Testis (tissue), 5 donors: ENCODE measurements at regions of chr14 and their contacts with region 1.

Region 1: DNA sequence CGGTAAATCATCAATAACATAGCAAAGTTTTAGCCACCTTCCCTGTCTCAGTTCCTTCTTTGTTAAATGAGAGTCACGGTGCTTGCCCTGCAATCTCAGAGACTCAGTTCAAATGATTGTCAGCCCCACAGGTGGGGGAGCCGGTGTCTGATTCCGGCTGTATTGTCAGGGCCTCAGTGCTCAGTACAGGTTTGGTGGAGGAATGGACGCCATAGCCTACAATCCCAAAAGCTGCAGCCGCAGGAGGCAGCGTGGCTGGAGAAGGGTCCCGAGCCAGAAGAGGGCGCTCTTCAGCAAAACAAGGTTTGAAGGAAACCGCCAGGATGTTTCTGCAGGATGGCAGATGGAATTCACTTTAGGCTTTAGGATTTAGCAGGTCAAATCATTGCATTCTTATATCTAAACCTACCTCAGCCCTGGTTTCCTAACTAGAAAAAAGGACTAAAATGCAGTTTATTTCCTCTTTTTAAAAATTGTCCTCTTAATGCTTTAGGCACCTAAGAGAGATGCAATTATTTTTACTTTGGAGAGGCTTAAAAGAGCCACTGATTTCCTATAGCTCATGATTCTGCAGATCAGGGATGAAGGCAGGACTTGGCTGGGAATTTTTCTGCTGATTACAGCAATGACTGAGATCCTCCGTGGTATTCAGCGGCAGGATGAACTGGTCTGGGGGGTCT is 29.2 kb downstream of the FOS start:
- DNase-seq: peak; percentile 94
- H3K4me3 ChIP-seq: no peak overlapping the region
- H3K27ac ChIP-seq: no peak overlapping the region
- H3K4me1 ChIP-seq: peaks cover 7% of the 10 kb centered on the region
- H3K27me3 ChIP-seq: no peaks in the 10 kb centered on the region
- CTCF ChIP-seq: peak; percentile 79 to 93 (median 84)
- POLR2A ChIP-seq: no peak

Region 2: DNA sequence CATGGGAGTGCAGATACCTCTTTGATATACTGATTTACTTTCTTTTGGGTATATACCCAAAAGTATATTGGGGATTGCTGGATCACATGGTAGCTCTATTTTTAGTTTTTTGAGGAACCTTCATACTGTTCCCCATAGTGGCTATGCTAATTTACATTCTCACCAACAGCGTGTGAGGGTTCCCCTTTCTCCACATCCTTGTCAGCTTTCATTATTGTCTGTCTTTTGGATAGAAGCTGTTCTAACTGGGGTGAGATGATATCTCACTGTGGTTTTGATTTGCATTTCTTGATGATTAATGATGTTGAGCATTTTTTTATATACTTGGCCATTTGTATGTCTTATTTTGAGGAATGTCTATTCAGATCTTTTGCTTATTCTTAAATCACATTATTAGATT is 75.9 kb after region 1 on chr14:
- intact Hi-C with region 1: no loop called
- DNase-seq: no peak
- H3K4me3 ChIP-seq: no peak overlapping the region
- H3K27ac ChIP-seq: no peak overlapping the region
- H3K4me1 ChIP-seq: peaks cover 22% of the 10 kb centered on the region
- H3K27me3 ChIP-seq: no peaks in the 10 kb centered on the region
- CTCF ChIP-seq: no peak
- POLR2A ChIP-seq: no peak

Region 3: GRCh38 chr14:75427482-75428229 is 119.8 kb after region 1 on chr14 and contains the start of gene JDP2:
- intact Hi-C with region 1: no loop called
- DNase-seq: peak; percentile 86
- H3K4me3 ChIP-seq: peak within 1 kb of the TSS; percentile 63 to 71
- H3K27ac ChIP-seq: peak within 1 kb of the TSS; percentile 78 to 86
- H3K4me1 ChIP-seq: peaks cover 21% of the 10 kb centered on the region
- H3K27me3 ChIP-seq: no peaks in the 10 kb centered on the region
- CTCF ChIP-seq: no peak
- POLR2A ChIP-seq: no peak
- total RNA-seq, gene JDP2: 10.7 to 19.0 TPM

Region 4: GRCh38 chr14:75487155-75487671 is 179.4 kb after region 1 on chr14:
- intact Hi-C with region 1: loop called (anchors 5 kb)
- DNase-seq: no peak
- H3K4me3 ChIP-seq: no peak overlapping the region
- H3K27ac ChIP-seq: no peak overlapping the region
- H3K4me1 ChIP-seq: no peaks in the 10 kb centered on the region
- H3K27me3 ChIP-seq: no peaks in the 10 kb centered on the region
- CTCF ChIP-seq: no peak
- POLR2A ChIP-seq: no peak

Region 5: DNA sequence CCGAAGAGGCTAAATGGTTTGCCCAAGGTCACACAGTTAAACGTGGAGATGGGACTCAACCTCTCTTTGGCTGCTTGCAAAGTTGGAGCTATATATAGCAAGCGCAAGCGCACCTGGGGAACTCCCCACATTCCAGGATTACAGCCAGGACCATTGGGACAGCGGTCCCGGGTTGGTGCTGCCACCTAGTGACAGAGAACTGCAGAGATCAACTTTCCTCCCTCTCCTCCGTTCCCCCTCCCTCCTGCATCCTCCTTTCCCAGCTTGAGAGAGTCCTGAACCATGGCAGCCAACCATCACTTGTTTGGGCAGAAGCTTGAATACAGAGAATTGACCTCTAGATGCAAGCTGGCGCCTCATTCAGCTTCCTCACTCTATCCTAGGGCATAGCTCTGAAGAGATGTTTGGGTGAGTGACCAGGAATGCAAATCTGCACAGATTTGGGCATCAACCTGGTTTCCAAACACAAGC is 253.2 kb after region 1 on chr14:
- intact Hi-C with region 1: loop called (anchors 10 kb)
- DNase-seq: peak; percentile 86
- H3K4me3 ChIP-seq: no peak overlapping the region
- H3K27ac ChIP-seq: no peak overlapping the region
- H3K4me1 ChIP-seq: peaks cover 5% of the 10 kb centered on the region
- H3K27me3 ChIP-seq: no peaks in the 10 kb centered on the region
- CTCF ChIP-seq: peak; percentile 59 to 78 (median 69)
- POLR2A ChIP-seq: no peak